Lower leg skin (tissue), 4 donors: ENCODE measurements at regions of chr2 and their contacts with region 1.

Region 1: DNA sequence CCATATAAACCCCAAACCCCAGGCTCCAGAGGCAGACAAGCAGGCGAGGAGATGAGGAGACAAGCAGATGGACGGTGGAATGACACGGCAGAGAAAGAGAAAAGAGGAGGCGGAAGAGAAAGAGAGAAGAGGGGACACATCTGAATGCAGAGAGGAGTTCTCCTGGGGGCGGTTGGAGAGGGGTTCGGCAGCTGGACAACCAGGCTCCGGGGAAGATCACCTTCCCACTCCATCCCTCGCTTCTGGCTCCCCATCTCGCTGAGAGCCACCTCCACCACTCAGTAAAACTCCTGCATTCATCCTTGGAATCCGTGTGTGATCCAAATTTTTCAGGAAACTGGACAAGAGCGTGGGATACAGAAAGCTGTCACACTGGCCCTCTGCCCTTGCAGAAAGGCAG is 966.7 kb upstream of the NXPH2 start:
- DNase-seq: no peak
- H3K4me3 ChIP-seq: no peak overlapping the region
- CTCF ChIP-seq: no peak
- POLR2A ChIP-seq: no peak

Region 2: GRCh38 chr2:139964721-139965424 is 218.0 kb after region 1 on chr2:
- intact Hi-C with region 1: loop called (anchors 5 kb)
- DNase-seq: no peak
- H3K4me3 ChIP-seq: no peak overlapping the region
- CTCF ChIP-seq: no peak
- POLR2A ChIP-seq: no peak